Activated CD4-positive, alpha-beta T cell treated with anti-CD3 and anti-CD28 coated beads, Interleukin-2, amount 10 ng/mL, durations not matched to agents 7 days and 5 days (primary cell): ENCODE measurements at regions of chr19 and their contacts with region 1.

Region 1: DNA sequence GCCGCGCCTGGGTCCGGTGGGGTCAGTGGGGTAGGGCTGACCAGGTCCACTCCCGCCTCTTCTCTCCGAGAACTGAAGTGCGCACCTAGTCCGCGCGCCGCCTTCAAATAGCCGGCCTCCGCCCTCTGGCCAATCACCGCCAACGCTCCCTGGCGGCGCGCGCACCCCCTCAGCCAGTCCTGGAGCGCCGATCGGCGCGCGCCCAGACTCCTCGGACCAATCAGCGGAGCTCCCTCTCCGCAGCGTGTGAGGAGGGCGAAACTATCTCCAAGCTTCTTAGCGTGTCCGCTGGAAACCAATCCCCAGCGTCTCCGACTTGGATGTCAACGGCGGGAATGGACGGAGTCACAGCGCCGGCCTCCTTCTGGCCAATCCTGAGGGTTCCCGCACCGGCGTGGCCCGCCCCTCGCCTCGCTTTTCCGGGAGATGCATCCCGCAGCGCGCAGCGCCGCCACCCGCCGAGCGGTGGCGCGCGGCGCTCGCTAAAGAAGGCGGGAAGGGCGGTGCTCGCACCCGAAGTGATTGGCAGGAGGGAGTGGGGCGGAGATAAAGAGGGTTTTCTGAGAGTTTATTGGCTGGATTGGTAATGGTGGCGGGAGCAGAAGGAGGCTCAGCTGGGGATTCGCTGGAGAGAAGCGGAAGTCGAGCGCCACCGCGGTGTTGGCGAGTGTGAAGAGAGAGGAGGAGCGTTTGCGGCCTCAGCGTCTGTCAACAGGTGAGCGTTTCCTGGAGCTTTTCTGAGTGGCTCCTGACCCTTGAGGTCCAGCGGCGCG is at the start of gene ASF1B:
- DNase-seq: peak; percentile 99
- H3K4me3 Mint-ChIP-seq: peak within 1 kb of the TSS; percentile 81
- H3K27ac Mint-ChIP-seq: peak within 1 kb of the TSS; percentile 93
- H3K4me1 Mint-ChIP-seq: peaks cover 44% of the 10 kb centered on the region
- H3K27me3 Mint-ChIP-seq: no peaks in the 10 kb centered on the region
- total RNA-seq, gene ASF1B: 119 to 131 TPM

Region 2: GRCh38 chr19:14031719-14032480 is 104.8 kb before region 1 on chr19 and contains the start of gene IL27RA:
- CTCF ChIA-PET with region 1: no interaction called
- POLR2A ChIA-PET with region 1: no interaction called
- DNase-seq: peak; percentile 88
- H3K4me3 Mint-ChIP-seq: peak within 1 kb of the TSS; percentile 93
- H3K27ac Mint-ChIP-seq: peak within 1 kb of the TSS; percentile 96
- H3K4me1 Mint-ChIP-seq: peaks cover 29% of the 10 kb centered on the region
- H3K27me3 Mint-ChIP-seq: peaks cover 2% of the 10 kb centered on the region
- total RNA-seq, gene IL27RA: 66.5 to 70.3 TPM

Region 3: DNA sequence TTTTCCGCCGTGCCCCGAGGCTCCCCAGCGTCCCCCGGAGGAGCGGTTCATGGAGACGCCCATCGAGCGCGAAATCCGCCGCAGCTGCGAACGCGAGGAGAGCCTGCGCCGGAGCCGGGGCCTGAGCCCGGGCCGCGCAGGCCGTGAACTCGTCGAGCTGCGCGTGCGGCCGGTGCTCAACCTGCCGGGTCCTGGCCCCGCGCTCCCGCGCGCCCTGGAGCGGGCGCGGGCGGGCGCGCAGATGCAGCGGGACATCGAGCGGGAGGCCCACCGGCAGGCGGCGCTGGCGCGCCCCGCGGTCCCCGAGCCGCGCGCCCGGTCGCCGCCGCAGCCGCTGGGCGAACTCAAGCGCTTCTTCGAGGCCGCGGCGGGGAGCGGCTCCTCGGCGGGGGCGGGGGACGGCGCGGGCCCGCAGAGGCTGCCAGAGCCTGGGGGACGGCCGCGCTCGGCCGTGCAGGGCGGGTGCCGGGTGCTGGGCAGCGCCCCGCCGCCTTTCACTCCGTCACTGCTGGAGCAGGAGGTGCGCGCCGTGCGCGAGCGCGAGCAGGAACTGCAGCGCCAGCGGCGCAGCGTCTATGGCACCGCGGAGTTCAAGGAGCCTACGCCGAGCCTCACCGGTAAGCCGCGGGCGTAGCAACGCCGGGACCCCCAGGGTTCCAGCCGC is 63.3 kb before region 1 on chr19:
- CTCF ChIA-PET with region 1: interaction called, 22 read pairs
- POLR2A ChIA-PET with region 1: no interaction called
- DNase-seq: peak; percentile 75
- H3K4me3 Mint-ChIP-seq: peak overlapping the region; percentile 84
- H3K27ac Mint-ChIP-seq: peak overlapping the region; percentile 48
- H3K4me1 Mint-ChIP-seq: peaks cover 30% of the 10 kb centered on the region
- H3K27me3 Mint-ChIP-seq: peaks cover 13% of the 10 kb centered on the region

Region 4: DNA sequence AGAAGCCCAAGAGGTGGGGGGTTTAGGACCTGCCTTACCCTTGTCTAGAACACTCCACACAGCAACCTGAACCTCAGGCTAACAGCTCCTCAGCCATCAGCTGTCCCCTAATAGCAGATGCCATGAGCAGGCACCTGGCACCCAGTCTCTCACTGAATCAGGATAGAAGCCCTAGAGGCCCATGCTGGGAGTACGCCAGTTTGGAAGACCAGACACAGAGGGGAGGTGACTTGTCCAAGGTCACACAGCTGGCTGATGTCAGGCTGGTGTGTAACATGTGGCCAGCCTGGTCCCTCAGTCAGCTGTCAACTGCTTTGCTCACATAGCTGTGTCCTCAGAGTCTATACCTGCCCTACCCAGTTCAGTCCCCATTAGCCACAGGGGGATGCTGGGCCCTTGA is 33.4 kb before region 1 on chr19:
- CTCF ChIA-PET with region 1: interaction called, 11 read pairs
- POLR2A ChIA-PET with region 1: no interaction called
- DNase-seq: no peak
- H3K4me3 Mint-ChIP-seq: no peak overlapping the region
- H3K27ac Mint-ChIP-seq: no peak overlapping the region
- H3K4me1 Mint-ChIP-seq: peaks cover 3% of the 10 kb centered on the region
- H3K27me3 Mint-ChIP-seq: no peaks in the 10 kb centered on the region

Region 5: GRCh38 chr19:14147797-14148605 is 11.3 kb after region 1 on chr19:
- CTCF ChIA-PET with region 1: interaction called, 27 read pairs
- POLR2A ChIA-PET with region 1: no interaction called
- DNase-seq: peak; percentile 51
- H3K4me3 Mint-ChIP-seq: peak overlapping the region; percentile 77
- H3K27ac Mint-ChIP-seq: peak overlapping the region; percentile 98
- H3K4me1 Mint-ChIP-seq: peaks cover 48% of the 10 kb centered on the region
- H3K27me3 Mint-ChIP-seq: no peaks in the 10 kb centered on the region

Region 6: DNA sequence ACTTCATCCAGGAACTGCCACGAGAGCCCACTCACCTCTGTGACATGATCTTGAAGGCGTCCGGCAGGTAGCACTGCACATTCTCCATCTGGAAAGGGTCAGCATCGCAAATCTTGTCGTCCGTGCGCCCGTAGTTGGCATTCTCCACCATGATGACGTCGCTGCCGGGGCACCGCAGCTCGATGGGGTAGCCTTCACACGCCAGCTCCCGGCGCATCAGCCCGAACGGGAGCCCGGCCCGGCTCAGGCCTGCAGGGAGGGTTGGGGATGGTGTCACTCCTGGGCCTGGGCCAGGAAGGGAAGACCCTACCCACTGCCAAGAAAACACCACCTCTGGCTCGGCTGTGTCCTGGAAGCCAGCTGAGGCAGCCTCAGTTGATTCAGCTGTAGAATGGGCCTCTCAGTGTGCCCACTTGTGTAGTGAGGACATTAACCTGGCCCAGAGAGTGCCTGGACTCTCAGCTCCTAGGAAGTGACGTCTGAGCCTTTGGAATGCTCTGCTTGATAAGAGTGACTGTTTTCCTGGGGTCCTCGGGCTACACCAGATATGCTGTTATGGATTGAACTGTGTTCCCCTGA is 40.9 kb after region 1 on chr19:
- CTCF ChIA-PET with region 1: no interaction called
- POLR2A ChIA-PET with region 1: no interaction called
- DNase-seq: no peak
- H3K4me3 Mint-ChIP-seq: no peak overlapping the region
- H3K27ac Mint-ChIP-seq: no peak overlapping the region
- H3K4me1 Mint-ChIP-seq: peaks cover 9% of the 10 kb centered on the region
- H3K27me3 Mint-ChIP-seq: no peaks in the 10 kb centered on the region

Region 7: DNA sequence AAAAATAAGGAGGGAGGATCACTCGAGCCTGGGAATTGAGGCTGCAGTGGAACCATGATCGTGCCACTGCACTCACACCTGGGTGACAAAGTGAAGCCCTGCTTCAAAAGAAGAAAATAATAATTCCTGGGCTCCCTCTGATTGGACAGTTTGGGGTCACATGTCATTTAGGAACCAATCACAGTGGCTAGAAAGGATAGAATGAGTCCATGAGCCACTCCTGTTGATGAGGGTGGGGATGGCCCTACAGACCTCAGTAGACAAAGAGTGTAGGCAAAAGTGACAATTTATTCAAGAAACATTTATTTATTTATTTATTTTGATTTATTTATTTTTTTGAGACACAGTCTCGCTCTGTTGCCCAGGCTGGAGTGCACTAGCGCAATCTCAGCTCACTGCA is 217.8 kb after region 1 on chr19:
- CTCF ChIA-PET with region 1: interaction called, 20 read pairs
- POLR2A ChIA-PET with region 1: no interaction called
- DNase-seq: no peak
- H3K4me3 Mint-ChIP-seq: no peak overlapping the region
- H3K27ac Mint-ChIP-seq: no peak overlapping the region
- H3K4me1 Mint-ChIP-seq: peaks cover 38% of the 10 kb centered on the region
- H3K27me3 Mint-ChIP-seq: no peaks in the 10 kb centered on the region

Region 8: GRCh38 chr19:14405758-14406644 is 269.3 kb after region 1 on chr19:
- CTCF ChIA-PET with region 1: interaction called, 11 read pairs
- POLR2A ChIA-PET with region 1: no interaction called
- DNase-seq: peak; percentile 88
- H3K4me3 Mint-ChIP-seq: no peak overlapping the region
- H3K27ac Mint-ChIP-seq: peak overlapping the region; percentile 75
- H3K4me1 Mint-ChIP-seq: peaks cover 31% of the 10 kb centered on the region
- H3K27me3 Mint-ChIP-seq: no peaks in the 10 kb centered on the region

Region 9: GRCh38 chr19:14487370-14488125 is 350.9 kb after region 1 on chr19:
- CTCF ChIA-PET with region 1: interaction called, 10 read pairs
- POLR2A ChIA-PET with region 1: no interaction called
- DNase-seq: no peak
- H3K4me3 Mint-ChIP-seq: no peak overlapping the region
- H3K27ac Mint-ChIP-seq: no peak overlapping the region
- H3K4me1 Mint-ChIP-seq: peaks cover 12% of the 10 kb centered on the region
- H3K27me3 Mint-ChIP-seq: no peaks in the 10 kb centered on the region